ENCODE measurements at regions of chr1 and their contacts with region 1.

Region 1: GRCh38 chr1:97920832-97921571 is at the start of gene DPYD:
- DNase-seq: peak; percentile 96
- H3K4me3 Mint-ChIP-seq: peak within 1 kb of the TSS; percentile 93
- H3K27ac Mint-ChIP-seq: peak within 1 kb of the TSS; percentile 98
- H3K4me1 Mint-ChIP-seq: peaks cover 44% of the 10 kb centered on the region
- H3K27me3 Mint-ChIP-seq: no peaks in the 10 kb centered on the region
- total RNA-seq, gene DPYD: 13.4 and 13.8 TPM in 2 replicates

Region 2: DNA sequence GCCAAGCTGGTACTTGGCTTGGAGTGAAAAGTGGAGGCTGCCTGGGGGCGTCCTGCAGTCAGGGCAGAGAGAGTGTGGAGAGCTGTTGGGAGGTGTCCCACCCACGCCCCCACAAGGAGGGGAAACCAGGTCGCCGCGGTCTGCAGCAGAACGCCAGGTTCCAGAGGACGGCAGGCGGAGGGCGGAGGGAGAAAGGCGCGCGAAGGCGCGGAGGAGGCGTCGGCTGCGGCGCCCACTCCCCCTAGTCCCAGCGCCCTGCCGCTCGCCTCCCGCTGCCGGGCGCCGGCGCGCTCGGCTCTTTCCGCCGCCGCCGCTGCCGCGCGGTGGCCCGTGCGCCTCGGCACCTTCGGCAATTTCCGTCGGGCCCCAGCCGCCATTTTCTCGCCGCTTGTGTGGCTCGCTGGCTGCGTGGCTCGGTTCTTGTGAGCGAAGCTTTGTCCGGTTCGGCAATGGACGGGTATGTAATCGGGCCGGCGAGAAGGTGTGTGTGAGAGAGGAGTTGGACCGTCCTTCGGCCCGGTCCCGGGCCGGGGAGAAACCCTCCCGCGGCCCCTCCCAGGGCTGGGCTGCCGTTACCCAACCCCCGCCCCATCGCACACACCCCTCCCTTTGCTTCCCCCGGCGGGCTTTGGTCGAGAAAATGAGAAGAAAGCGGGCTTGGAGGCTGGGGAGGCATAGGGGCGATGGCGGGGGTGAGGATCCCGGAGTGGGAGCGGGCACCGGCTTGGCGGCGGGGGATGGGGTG is 1199.4 kb before region 1 on chr1 and contains the start of gene PTBP2:
- intact Hi-C with region 1: loop called (anchors 10 kb)
- DNase-seq: peak; percentile 95
- H3K4me3 Mint-ChIP-seq: peak within 1 kb of the TSS; percentile 97
- H3K27ac Mint-ChIP-seq: peak within 1 kb of the TSS; percentile 93
- H3K4me1 Mint-ChIP-seq: peaks cover 20% of the 10 kb centered on the region
- H3K27me3 Mint-ChIP-seq: peaks cover 7% of the 10 kb centered on the region
- total RNA-seq, gene PTBP2: 15.6 and 16.2 TPM in 2 replicates

Region 3: DNA sequence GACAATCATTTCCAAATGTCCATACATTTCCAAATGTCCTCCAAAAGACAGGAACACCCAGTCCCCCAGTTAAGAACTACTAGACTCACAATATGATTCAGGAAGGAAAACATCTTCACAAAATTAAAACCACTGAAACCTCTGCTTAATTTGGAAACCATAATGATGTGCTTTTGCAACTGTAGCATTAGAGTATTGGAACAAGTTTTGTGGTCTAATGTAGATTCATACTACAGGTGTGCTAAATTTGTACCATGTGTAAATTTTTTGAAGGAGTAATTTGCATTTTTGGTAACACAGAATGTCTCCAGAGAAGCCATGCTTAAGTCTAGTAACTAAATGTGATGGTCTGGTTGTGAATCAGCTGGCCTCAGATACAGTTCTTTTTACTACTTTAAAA is 129.8 kb before region 1 on chr1:
- intact Hi-C with region 1: loop called (anchors 2 kb)
- DNase-seq: no peak
- H3K4me3 Mint-ChIP-seq: peak overlapping the region; percentile 29
- H3K27ac Mint-ChIP-seq: peak overlapping the region; percentile 1
- H3K4me1 Mint-ChIP-seq: peaks cover 17% of the 10 kb centered on the region
- H3K27me3 Mint-ChIP-seq: no peaks in the 10 kb centered on the region

Region 4: DNA sequence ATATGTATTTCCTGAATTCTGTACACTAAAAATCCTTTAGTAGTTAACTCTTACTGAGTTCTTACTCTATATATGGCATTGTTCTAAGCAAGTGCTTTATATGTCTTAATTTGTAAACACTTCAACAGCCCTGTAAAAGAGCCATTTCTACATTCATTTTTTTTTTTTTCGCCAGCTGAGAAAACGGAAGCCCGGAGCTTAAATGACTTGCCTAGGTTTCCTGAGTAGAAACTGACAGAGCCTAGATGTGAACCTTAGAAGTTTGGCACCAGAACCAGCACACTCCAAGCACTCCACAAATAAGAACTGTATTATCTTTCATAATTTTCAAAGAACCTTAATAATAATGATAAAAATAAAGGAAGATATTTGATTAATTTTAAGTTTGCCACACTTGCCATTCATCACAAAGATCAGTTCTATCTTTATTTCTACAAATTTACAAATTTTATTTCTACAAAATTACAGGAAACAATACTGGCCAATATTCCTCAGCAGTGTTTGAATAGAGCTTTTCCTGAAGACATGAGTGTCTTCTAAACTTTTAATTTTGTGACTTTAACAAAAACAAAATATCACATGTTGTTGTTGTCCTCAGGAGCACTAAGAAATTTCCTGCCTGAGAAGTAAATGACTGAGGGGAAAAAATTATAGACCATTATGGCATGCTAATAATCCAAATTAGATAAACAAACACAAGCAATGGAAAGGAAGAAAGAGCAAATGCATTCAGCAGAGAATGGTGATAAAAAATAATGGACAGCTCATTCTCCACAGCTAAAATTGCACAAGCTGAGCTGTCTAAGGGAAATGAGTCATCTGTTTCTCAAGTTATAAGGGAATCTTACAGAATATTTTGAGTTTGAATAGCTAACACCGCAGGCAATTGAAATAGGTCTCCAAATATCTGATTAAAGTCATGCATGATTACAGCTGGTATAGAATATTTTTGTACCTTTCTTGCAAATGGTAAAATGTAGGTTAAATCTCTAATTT is 71.4 kb before region 1 on chr1:
- intact Hi-C with region 1: loop called (anchors 5 kb)
- DNase-seq: no peak
- H3K4me3 Mint-ChIP-seq: peak overlapping the region; percentile 31
- H3K27ac Mint-ChIP-seq: no peak overlapping the region
- H3K4me1 Mint-ChIP-seq: peaks cover 10% of the 10 kb centered on the region
- H3K27me3 Mint-ChIP-seq: no peaks in the 10 kb centered on the region

Region 5: GRCh38 chr1:97943354-97943753 is 22.4 kb after region 1 on chr1:
- intact Hi-C with region 1: loop called (anchors 2 kb)
- DNase-seq: no peak
- H3K4me3 Mint-ChIP-seq: peak overlapping the region; percentile 70
- H3K27ac Mint-ChIP-seq: no peak overlapping the region
- H3K4me1 Mint-ChIP-seq: peaks cover 36% of the 10 kb centered on the region
- H3K27me3 Mint-ChIP-seq: peaks cover 12% of the 10 kb centered on the region

Region 6: DNA sequence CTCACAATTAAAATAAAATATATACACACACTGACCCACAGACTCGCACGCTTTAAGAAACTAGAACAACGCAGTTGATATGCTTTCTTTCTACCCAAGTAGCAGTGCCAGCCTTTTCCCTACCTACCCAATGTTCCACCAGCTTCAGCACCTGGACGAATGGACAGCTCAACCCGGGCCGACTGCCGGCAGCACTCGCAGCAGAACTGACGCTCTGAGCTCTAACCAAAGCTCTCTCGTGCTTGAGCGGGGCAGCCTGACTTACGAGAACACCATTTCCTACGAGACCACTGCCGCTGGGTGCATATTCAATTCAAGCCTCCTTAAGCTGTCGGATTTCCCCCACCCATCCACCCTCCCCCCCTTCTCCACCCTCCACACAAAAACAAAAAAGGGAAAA is 127.2 kb after region 1 on chr1:
- intact Hi-C with region 1: loop called (anchors 1 kb)
- DNase-seq: peak; percentile 91
- H3K4me3 Mint-ChIP-seq: peak overlapping the region; percentile 13
- H3K27ac Mint-ChIP-seq: no peak overlapping the region
- H3K4me1 Mint-ChIP-seq: peaks cover 34% of the 10 kb centered on the region
- H3K27me3 Mint-ChIP-seq: peaks cover 87% of the 10 kb centered on the region